ENCODE measurements at regions of chr5 and their contacts with region 1.

Region 1: GRCh38 chr5:124806373-124807077 is 60.1 kb upstream of the ZNF608 start:
- DNase-seq: peak; percentile 90
- H3K4me3 ChIP-seq: no peak overlapping the region
- H3K27ac ChIP-seq: no peak overlapping the region
- H3K4me1 ChIP-seq: peaks cover 0 to 11% (median 4%) of the 10 kb centered on the region in 4 donors
- H3K27me3 ChIP-seq: no peaks in the 10 kb centered on the region
- CTCF ChIP-seq: no peak
- EP300 ChIP-seq: no peak
- POLR2A ChIP-seq: no peak

Region 2: DNA sequence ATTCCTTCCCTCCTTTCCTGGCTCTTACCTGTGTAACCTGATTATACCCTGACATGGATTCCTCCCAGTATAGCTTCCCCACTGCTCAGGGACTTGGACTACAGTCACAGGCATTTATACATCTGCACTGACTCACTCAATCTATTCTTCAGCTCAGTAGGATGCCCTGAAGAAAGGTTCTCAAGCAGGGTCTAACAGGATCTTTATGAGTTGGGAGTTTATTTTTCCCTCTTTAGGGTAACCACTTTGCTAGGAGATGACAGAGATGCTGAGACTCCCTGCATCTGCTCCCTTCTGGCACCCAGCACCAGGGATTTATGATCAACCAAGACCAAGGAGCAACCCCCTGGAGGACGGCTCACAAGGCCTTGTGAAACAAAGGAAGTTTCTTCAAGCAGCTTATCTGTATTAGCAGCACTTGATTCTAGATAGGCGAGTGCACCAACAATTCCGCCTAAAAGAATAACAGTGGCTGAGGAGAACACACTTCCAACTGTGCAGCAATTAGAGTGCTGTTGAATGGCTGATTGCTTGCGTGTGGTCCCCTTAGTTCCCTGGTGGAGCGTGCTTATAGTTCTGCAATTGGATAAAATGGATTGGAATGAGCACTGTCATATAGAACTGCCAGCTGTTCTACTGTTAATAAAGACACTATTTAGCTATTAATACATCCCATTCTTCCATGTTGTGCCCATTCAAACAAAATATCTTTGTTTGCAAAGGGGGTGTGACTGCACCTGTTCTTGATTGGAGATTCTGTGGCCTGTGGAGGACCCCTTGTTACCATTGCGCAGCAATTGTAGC is 542.6 kb before region 1 on chr5:
- intact Hi-C with region 1: no loop called
- DNase-seq: no peak
- H3K4me3 ChIP-seq: no peak overlapping the region
- H3K27ac ChIP-seq: no peak overlapping the region
- H3K4me1 ChIP-seq: peaks cover 0 to 24% (median 23%) of the 10 kb centered on the region in 4 donors
- H3K27me3 ChIP-seq: no peaks in the 10 kb centered on the region
- CTCF ChIP-seq: no peak
- EP300 ChIP-seq: no peak
- POLR2A ChIP-seq: no peak

Region 3: GRCh38 chr5:125064621-125065438 is 258.3 kb after region 1 on chr5:
- intact Hi-C with region 1: loop called (anchors 5 kb)
- DNase-seq: no peak
- H3K4me3 ChIP-seq: no peak overlapping the region
- H3K27ac ChIP-seq: no peak overlapping the region
- H3K4me1 ChIP-seq: peaks cover 0 to 8% (median 0%) of the 10 kb centered on the region in 4 donors
- H3K27me3 ChIP-seq: no peaks in the 10 kb centered on the region
- CTCF ChIP-seq: no peak
- EP300 ChIP-seq: no peak
- POLR2A ChIP-seq: no peak

Measured in sigmoid colon (tissue), 7 donors.